Right ventricle myocardium inferior (tissue), 1 donor: ENCODE measurements at regions of chr15 and their contacts with region 1.

Region 1: DNA sequence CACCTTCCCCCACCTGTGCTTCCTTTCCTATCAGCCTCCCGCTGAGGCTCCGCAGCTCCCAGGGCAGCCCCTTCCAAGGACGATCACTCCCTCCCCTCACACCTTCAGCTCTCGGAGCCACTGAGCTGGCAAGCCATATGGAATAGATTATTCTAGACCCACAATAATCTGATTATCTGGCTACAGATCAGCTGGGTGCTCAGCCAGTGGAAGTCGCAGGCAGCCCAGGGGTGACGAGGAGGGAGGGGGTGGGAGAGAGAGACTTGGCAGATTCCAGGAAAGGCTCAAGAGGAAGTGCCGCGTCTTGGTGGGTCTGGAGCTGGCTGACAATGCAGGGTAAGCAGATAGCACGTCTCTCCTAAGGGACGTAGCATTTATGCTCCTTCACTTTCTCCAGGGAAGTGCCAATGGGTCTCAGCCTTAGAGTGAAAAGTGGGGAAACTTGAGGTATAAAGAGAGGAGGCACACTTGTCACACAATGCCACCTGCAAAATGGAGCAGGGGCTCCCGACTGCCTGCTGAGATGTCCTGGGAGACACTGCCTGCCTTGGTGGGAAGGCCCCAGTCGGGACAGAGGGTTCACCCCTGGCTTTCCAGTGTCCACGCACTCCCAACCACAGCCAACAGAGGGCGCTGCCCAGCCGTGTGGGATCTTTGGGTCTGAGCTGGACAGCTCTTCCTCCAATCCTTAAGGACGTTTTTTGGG is 9.4 kb upstream of the MESP1 start:
- DNase-seq: peak; percentile 91
- ATAC-seq: peak; percentile 90

Region 2: GRCh38 chr15:89971592-89971997 is 211.1 kb after region 1 on chr15:
- intact Hi-C with region 1: loop called (anchors 5 kb)
- DNase-seq: no peak
- ATAC-seq: peak; percentile 80

Region 3: DNA sequence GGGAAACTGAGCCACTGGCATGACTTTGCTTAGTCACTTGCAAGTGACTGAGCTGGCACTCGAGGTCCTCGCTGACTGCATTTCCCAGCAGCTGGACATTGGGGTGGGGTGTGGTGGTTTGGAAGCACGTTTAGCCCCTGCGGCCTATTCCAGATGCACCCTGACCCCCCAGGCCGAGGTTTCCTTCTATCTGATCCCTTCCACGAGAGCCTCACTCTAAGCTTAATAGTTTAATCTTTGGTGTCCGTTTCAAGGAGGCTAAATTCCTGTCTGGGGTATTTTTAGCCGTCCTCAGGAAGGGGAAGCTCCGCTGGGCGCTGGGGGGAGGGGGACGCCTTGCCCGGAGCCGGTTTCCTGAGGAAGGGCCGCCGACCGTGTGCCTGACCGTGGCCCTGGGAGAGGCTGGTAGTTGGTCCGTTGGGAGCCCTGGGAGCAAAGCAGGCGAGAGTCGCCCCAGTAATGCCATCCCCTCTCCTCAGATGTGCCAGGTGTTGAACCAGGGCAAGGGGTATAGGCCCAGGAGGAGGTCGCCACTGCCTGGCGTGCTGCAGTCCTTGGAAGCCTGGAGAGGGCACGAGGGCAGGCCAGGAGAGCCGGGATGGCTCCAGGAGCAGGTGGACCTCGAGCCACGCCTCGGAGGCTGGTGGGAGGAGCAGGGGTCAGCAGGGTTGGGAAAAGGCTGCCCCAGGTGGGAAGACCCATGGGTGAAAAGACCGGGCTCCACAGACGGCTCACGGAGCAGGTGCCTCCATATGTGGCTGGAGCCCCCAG is 304.6 kb after region 1 on chr15:
- intact Hi-C with region 1: loop called (anchors 5 kb)
- DNase-seq: peak; percentile 90
- ATAC-seq: peak; percentile 65